Ascending aorta (tissue), 2 donors: ENCODE measurements at regions of chr4 and their contacts with region 1.

Region 1: DNA sequence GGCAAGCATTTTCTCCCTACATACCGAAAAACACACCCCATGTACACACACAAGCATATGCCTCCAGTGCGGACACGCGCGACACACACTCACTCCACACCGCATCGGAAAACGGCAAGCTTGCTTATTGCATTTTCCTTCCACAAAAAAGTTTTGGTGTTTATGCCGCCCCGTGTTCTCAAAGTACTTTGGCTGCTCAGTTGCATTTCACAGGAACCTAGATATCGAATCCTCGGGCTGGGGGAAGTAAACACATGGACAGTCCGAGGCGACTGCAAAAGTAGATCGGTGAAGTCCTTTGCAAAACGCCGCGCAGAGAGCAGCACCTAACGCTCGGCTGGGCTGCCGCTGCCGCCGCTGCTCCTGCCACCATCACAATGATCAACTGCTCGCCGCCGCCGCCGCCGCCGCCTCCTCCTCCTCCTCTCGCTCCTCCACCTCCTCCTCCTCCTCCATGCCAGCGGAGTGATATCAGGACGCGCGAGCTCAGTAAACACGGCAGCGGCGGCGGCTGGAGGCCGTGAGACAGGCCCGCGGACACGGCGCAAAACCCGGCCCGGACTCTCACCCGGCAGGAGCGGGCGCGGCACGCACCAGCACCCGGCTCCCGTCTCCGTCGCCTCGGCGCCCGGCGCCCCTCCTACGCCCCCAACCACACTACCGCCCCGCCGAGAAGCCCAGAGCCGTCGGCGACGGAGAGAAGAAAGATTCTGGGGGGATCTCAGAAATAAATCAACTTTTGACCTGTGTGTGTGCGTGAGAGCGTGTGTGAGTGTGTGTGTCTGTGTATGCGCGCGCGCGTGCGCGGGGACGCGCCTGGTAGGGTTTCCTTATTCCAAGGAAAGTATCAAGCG is at the start of gene MAML3:
- DNase-seq: peak; percentile 66 to 96
- H3K4me3 ChIP-seq: peak within 1 kb of the TSS; percentile 79 to 91
- H3K27ac ChIP-seq: peak within 1 kb of the TSS; percentile 94 to 97
- H3K4me1 ChIP-seq: peaks cover 0 to 4% of the 10 kb centered on the region in 2 donors
- H3K27me3 ChIP-seq: no peaks in the 10 kb centered on the region
- CTCF ChIP-seq: no peak
- total RNA-seq, gene MAML3: 4.7 TPM

Region 2: GRCh38 chr4:139015269-139015947 is 1138.5 kb before region 1 on chr4 and contains the start of gene NOCT:
- intact Hi-C with region 1: loop called (anchors 10 kb)
- DNase-seq: peak; percentile 67 to 92
- H3K4me3 ChIP-seq: peak within 1 kb of the TSS; percentile 80 to 81
- H3K27ac ChIP-seq: peak within 1 kb of the TSS; percentile 83 to 96
- H3K4me1 ChIP-seq: peaks cover 0 to 8% of the 10 kb centered on the region in 2 donors
- H3K27me3 ChIP-seq: no peaks in the 10 kb centered on the region
- CTCF ChIP-seq: peak; percentile 13 to 32 (median 24)
- total RNA-seq, gene NOCT: 9.9 TPM

Region 3: GRCh38 chr4:139554893-139555704 is 598.8 kb before region 1 on chr4:
- intact Hi-C with region 1: loop called (anchors 2 kb)
- DNase-seq: peak; percentile 74 to 95
- H3K4me3 ChIP-seq: peak overlapping the region; percentile 82 to 99
- H3K27ac ChIP-seq: peak overlapping the region; percentile 99 to 100
- H3K4me1 ChIP-seq: peaks cover 0 to 30% of the 10 kb centered on the region in 2 donors
- H3K27me3 ChIP-seq: no peaks in the 10 kb centered on the region
- CTCF ChIP-seq: no peak

Region 4: GRCh38 chr4:139815778-139816601 is 338.0 kb before region 1 on chr4:
- intact Hi-C with region 1: loop called (anchors 5 kb)
- DNase-seq: peak in 1 of 2 donors; percentile 72
- H3K4me3 ChIP-seq: peak overlapping the region; percentile 36 to 74
- H3K27ac ChIP-seq: peak overlapping the region; percentile 52 to 87
- H3K4me1 ChIP-seq: peaks cover 6 to 16% of the 10 kb centered on the region in 2 donors
- H3K27me3 ChIP-seq: no peaks in the 10 kb centered on the region
- CTCF ChIP-seq: no peak

Region 5: DNA sequence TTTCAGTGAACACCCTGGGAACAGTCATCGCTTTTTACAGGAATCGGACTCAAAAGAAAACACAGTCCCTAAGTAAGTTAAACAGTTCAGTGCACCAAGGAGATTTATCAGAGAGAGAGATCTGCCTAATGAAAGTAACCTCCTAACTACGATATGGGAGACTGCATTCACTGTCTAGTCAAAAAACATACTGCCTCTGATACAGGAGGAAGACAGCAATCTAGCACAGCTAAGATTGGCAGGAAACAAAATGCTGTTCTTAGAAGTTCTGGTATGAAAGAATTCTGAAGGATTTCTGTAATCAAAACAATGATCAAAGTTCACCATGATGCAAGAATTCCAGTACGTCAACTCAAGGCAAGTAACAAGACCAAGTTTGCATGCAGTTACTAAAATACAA is 92.8 kb before region 1 on chr4:
- intact Hi-C with region 1: loop called (anchors 2 kb)
- DNase-seq: no peak
- H3K4me3 ChIP-seq: peak overlapping the region in 1 of 2 donors; percentile 48
- H3K27ac ChIP-seq: peak overlapping the region; percentile 59 to 71
- H3K4me1 ChIP-seq: peaks cover 0 to 11% of the 10 kb centered on the region in 2 donors
- H3K27me3 ChIP-seq: no peaks in the 10 kb centered on the region
- CTCF ChIP-seq: no peak

Region 6: GRCh38 chr4:140373328-140374129 is 219.6 kb after region 1 on chr4 and contains the start of gene SCOC:
- intact Hi-C with region 1: loop called (anchors 5 kb)
- DNase-seq: peak; percentile 99 to 100
- H3K4me3 ChIP-seq: peak within 1 kb of the TSS; percentile 93 to 99
- H3K27ac ChIP-seq: peak within 1 kb of the TSS; percentile 92 to 94
- H3K4me1 ChIP-seq: peaks cover 8 to 15% of the 10 kb centered on the region in 2 donors
- H3K27me3 ChIP-seq: no peaks in the 10 kb centered on the region
- CTCF ChIP-seq: no peak
- total RNA-seq, gene SCOC: 7.2 TPM

Region 7: GRCh38 chr4:140395668-140396067 is 241.7 kb after region 1 on chr4:
- intact Hi-C with region 1: no loop called
- DNase-seq: no peak
- H3K4me3 ChIP-seq: no peak overlapping the region
- H3K27ac ChIP-seq: no peak overlapping the region
- H3K4me1 ChIP-seq: no peaks in the 10 kb centered on the region
- H3K27me3 ChIP-seq: no peaks in the 10 kb centered on the region
- CTCF ChIP-seq: no peak